Dendritic cell treated with granulocyte-macrophage colony-stimulating factor and Interleukin-4, amounts not matched to agents 40 ng/mL and 50 ng/mL, for 4 days (primary cell): ENCODE measurements at regions of chr12 and their contacts with region 1.

Region 1: DNA sequence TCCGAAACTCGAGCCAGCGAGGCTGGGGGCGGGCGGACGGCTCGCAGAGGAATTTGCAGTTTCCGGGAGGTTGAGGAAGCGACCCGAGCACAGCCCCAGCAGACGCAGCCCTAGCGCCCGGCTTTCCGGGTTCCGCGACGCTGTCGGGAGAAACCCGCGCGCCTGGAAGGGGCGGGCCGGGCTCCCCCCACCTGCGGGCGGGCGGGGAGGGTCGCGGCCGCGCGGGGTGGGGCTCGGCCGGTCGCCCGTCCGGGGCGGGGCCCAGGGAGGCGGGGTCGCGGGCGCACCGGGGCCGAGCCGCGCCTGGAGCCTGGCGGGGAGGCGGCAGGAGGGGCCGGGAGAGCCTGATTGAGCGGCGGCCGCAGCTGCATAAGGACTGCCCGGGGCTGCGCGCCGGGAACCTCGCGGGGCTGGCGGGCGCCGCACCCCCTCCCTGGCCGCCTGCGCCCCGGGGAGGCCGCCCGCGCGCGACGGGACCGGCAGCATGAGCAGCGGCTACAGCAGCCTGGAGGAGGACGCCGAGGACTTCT is at the start of gene RASSF3:
- H3K4me3 Mint-ChIP-seq: peak within 1 kb of the TSS; percentile 96
- H3K27ac Mint-ChIP-seq: peak within 1 kb of the TSS; percentile 95
- H3K4me1 Mint-ChIP-seq: peaks cover 38% of the 10 kb centered on the region
- H3K27me3 Mint-ChIP-seq: no peaks in the 10 kb centered on the region

Region 2: GRCh38 chr12:64431791-64432190 is 178.4 kb before region 1 on chr12:
- intact Hi-C with region 1: no loop called
- H3K4me3 Mint-ChIP-seq: no peak overlapping the region
- H3K27ac Mint-ChIP-seq: no peak overlapping the region
- H3K4me1 Mint-ChIP-seq: no peaks in the 10 kb centered on the region
- H3K27me3 Mint-ChIP-seq: no peaks in the 10 kb centered on the region

Region 3: GRCh38 chr12:64625243-64626077 is 15.2 kb after region 1 on chr12:
- intact Hi-C with region 1: loop called (anchors 2 kb)
- H3K4me3 Mint-ChIP-seq: peak overlapping the region; percentile 72
- H3K27ac Mint-ChIP-seq: peak overlapping the region; percentile 93
- H3K4me1 Mint-ChIP-seq: peaks cover 54% of the 10 kb centered on the region
- H3K27me3 Mint-ChIP-seq: no peaks in the 10 kb centered on the region

Region 4: GRCh38 chr12:64696080-64696741 is 86.0 kb after region 1 on chr12:
- intact Hi-C with region 1: loop called (anchors 2 kb)
- H3K4me3 Mint-ChIP-seq: no peak overlapping the region
- H3K27ac Mint-ChIP-seq: no peak overlapping the region
- H3K4me1 Mint-ChIP-seq: peaks cover 38% of the 10 kb centered on the region
- H3K27me3 Mint-ChIP-seq: no peaks in the 10 kb centered on the region

Region 5: GRCh38 chr12:65039306-65039705 is 429.1 kb after region 1 on chr12:
- intact Hi-C with region 1: no loop called
- H3K4me3 Mint-ChIP-seq: no peak overlapping the region
- H3K27ac Mint-ChIP-seq: no peak overlapping the region
- H3K4me1 Mint-ChIP-seq: no peaks in the 10 kb centered on the region
- H3K27me3 Mint-ChIP-seq: no peaks in the 10 kb centered on the region